Psoas muscle (tissue), 8 donors: ENCODE measurements at regions of chr15 and their contacts with region 1.

Region 1: DNA sequence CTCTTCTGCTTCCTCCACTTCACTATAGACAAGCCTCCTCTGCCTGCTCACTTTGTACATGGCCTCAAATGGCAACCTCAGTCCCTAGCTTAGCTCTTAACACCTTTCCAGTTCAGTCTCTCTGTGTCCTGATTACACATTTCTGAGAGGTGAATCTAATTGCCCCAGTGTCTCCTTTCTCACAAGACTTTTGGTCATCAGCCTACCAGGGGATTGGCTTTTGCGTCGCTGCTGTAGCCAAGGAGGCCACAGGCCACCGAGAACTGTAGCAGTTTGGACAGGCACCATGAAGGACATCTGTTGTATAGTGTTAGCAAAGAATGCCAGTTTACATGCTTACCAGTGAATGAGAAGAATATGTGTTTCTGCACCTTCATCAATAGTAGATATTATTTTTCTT is 8.5 kb downstream of the IREB2 start:
- DNase-seq: no peak
- ATAC-seq: peak; percentile 57 to 88 (median 69)
- H3K4me3 ChIP-seq: no peak overlapping the region
- H3K27ac ChIP-seq: peak overlapping the region; percentile 50
- H3K4me1 ChIP-seq: peaks cover 36% of the 10 kb centered on the region
- H3K27me3 ChIP-seq: no peaks in the 10 kb centered on the region
- CTCF ChIP-seq: no peak

Region 2: GRCh38 chr15:78461171-78461888 is 14.8 kb after region 1 on chr15:
- intact Hi-C with region 1: loop called in 1 of 2 experiments (anchors 2 kb)
- DNase-seq: no peak
- ATAC-seq: no peak
- H3K4me3 ChIP-seq: no peak overlapping the region
- H3K27ac ChIP-seq: no peak overlapping the region
- H3K4me1 ChIP-seq: peaks cover 31% of the 10 kb centered on the region
- H3K27me3 ChIP-seq: no peaks in the 10 kb centered on the region
- CTCF ChIP-seq: no peak